Activated CD8-positive, alpha-beta T cell treated with anti-CD3 and anti-CD28 coated beads for 36 hours (primary cell): ENCODE measurements at regions of chr20 and their contacts with region 1.

Region 1: GRCh38 chr20:44609511-44610312 is 27.3 kb downstream of the PKIG start:
- DNase-seq: peak; percentile 91
- ATAC-seq: peak; percentile 99
- H3K4me3 Mint-ChIP-seq: peak overlapping the region; percentile 39
- H3K27ac Mint-ChIP-seq: peak overlapping the region; percentile 86
- H3K4me1 Mint-ChIP-seq: peaks cover 33% of the 10 kb centered on the region
- H3K27me3 Mint-ChIP-seq: no peaks in the 10 kb centered on the region
- CTCF ChIP-seq: peak; percentile 94

Region 2: DNA sequence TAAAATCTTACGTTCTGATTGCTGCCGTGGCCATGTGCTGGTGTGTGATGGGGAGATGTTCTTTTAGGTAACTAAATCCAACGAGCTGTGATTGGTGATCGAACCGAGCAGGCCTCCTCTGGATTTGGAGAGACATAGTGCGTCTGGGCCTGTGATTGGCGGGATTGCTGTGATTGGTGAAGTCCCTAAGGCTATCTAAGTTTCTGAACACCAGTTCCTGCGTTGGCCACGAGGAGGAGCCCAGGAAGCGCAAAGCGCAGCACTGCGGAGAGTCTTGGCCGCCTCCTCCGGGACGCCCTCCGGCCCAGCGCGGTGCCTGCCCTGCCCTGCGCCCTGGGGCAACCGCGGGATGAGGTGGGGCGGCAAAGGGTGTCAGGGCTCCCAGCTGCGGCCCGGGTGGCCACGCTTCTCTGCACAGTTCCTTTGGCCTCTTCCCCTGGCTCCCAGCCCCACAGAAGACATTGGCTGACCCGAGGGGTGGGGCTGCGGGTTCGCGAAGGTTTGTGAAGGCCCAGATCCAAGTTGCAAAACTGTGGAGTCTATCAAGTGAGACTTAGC is 221.2 kb before region 1 on chr20:
- CTCF ChIA-PET with region 1: interaction called, 18 read pairs
- POLR2A ChIA-PET with region 1: no interaction called
- intact Hi-C with region 1: loop called (anchors 2 kb)
- DNase-seq: peak; percentile 89
- ATAC-seq: peak; percentile 93
- H3K4me3 Mint-ChIP-seq: no peak overlapping the region
- H3K27ac Mint-ChIP-seq: no peak overlapping the region
- H3K4me1 Mint-ChIP-seq: peaks cover 2% of the 10 kb centered on the region
- H3K27me3 Mint-ChIP-seq: peaks cover 6% of the 10 kb centered on the region
- CTCF ChIP-seq: peak; percentile 91

Region 3: DNA sequence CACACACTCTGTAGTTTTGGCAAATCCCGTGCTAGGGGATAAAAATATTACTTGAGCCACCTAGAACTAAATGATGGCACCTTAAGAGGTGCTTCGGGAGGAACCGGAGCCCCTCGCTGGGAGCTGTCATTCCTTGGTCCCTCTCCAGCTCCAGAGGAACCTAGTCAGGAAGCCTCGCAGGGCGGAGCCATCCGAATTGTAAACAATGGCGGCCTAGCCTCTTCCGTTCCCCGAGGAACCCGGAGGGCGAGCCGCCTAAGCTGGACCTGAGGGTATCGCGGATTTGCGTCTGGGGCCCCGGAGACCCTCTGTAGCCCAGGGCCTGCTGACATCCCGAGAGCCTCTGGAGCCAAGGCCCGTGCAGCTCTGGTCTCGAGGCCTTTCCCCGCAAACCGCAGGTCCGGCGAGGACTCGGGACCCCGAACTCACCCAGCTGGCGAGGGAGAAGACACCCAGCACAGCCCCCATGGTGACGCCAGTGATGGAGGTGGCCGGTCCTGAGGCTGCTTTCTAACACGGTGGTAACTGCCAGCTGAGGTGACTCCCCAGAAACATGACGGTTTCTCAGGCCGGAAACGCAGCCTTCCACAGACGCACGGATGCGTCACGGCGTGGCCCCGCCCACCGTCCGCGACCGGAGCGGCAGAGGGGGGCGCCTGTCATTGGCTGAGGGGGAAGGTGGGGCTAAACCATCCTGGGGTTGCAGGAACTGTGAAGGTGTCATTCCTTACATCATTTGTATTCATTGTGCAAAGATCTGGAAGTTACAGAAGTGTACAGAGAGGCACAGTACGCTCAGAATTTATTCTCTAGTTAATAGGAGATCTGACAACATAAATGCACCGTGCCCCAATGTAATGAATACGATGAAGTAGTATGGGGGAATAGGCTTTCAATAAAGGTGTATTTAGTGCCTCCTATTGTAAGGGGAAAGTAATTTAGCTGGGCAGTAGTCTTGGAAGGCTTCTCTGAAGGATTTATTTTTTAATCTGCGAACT is 87.9 kb before region 1 on chr20 and contains the start of gene SERINC3:
- CTCF ChIA-PET with region 1: interaction called, 10 read pairs
- POLR2A ChIA-PET with region 1: interaction called, 3 read pairs
- intact Hi-C with region 1: no loop called
- DNase-seq: peak; percentile 98
- ATAC-seq: peak; percentile 99
- H3K4me3 Mint-ChIP-seq: peak within 1 kb of the TSS; percentile 83
- H3K27ac Mint-ChIP-seq: peak within 1 kb of the TSS; percentile 92
- H3K4me1 Mint-ChIP-seq: peaks cover 46% of the 10 kb centered on the region
- H3K27me3 Mint-ChIP-seq: no peaks in the 10 kb centered on the region
- CTCF ChIP-seq: peak; percentile 43
- total RNA-seq, gene SERINC3: 43.1 to 44.6 TPM

Region 4: GRCh38 chr20:44532259-44532980 is 77.3 kb before region 1 on chr20:
- CTCF ChIA-PET with region 1: no interaction called
- POLR2A ChIA-PET with region 1: no interaction called
- intact Hi-C with region 1: no loop called
- DNase-seq: no peak
- ATAC-seq: no peak
- H3K4me3 Mint-ChIP-seq: no peak overlapping the region
- H3K27ac Mint-ChIP-seq: no peak overlapping the region
- H3K4me1 Mint-ChIP-seq: peaks cover 4% of the 10 kb centered on the region
- H3K27me3 Mint-ChIP-seq: no peaks in the 10 kb centered on the region
- CTCF ChIP-seq: no peak

Region 5: DNA sequence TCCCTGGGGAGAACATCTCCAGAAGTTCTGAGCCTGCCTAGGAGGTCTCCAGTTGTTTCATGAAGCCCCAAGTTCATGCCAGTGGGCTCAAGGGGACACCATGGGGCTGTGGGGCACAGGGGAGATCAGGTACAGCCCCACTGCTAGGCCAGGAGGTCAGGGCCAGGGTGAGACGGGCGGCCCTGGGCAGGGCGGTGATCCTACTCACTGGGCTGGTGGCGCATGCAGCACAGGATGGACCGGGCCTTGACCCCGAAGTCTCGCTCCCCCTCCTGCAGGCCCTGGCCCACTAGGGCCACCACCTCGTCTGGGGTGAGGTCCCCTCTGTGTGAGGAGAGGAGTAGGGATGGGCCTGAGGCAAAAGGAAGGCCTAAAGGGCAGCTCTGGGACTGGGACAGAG is 15.6 kb after region 1 on chr20:
- CTCF ChIA-PET with region 1: no interaction called
- POLR2A ChIA-PET with region 1: no interaction called
- intact Hi-C with region 1: no loop called
- DNase-seq: no peak
- ATAC-seq: no peak
- H3K4me3 Mint-ChIP-seq: no peak overlapping the region
- H3K27ac Mint-ChIP-seq: no peak overlapping the region
- H3K4me1 Mint-ChIP-seq: no peaks in the 10 kb centered on the region
- H3K27me3 Mint-ChIP-seq: no peaks in the 10 kb centered on the region
- CTCF ChIP-seq: no peak

Region 6: DNA sequence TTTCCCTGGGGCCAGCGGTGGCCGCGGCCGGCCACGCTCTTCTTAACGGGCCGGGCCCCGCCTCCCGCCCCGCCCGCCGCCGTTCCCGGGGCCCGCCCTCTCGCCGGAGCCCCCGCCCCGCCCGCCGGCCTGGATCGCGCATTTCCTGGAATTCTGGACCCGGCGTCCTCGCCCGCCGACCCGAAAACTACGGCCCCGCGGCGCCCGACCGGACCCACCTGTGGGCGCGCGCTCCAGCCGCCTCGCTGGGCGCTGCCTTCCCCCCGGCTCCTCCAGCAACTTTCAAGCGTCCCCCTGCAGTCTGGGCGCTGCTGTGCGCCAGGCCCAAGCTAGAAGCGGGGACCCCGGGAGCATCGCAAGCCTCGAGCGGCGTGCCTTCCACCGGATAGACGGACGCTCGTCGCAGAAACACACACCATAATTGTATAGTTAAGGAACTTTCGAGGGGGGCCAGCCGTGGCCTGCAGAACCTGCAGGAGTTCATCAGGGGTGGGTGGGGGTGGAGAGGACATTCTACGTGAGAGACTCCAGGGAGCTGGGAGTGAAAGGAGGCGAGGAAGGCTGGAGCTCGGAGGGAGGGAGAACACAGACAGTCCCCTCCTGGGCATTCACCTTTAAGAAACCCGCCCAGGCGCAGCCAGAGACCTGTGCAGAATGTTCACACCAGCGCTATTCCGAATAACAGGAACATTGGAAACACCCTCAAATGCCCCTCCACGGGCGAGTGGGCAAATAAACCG is 42.1 kb after region 1 on chr20 and contains the start of gene ADA:
- CTCF ChIA-PET with region 1: interaction called, 10 read pairs
- POLR2A ChIA-PET with region 1: no interaction called
- intact Hi-C with region 1: no loop called
- DNase-seq: peak; percentile 67
- ATAC-seq: peak; percentile 60
- H3K4me3 Mint-ChIP-seq: peak within 1 kb of the TSS; percentile 75
- H3K27ac Mint-ChIP-seq: peak within 1 kb of the TSS; percentile 75
- H3K4me1 Mint-ChIP-seq: peaks cover 29% of the 10 kb centered on the region
- H3K27me3 Mint-ChIP-seq: no peaks in the 10 kb centered on the region
- CTCF ChIP-seq: no peak
- total RNA-seq, gene ADA: 32.8 to 36.7 TPM